Calu3 (cell line): ENCODE measurements at regions of chr1 and their contacts with region 1.

Region 1: GRCh38 chr1:12314333-12314903 is 84.6 kb downstream of the VPS13D start:
- DNase-seq: no peak
- H3K4me3 Mint-ChIP-seq: no peak overlapping the region
- H3K27ac Mint-ChIP-seq: no peak overlapping the region
- H3K4me1 Mint-ChIP-seq: no peaks in the 10 kb centered on the region
- H3K27me3 Mint-ChIP-seq: no peaks in the 10 kb centered on the region
- CTCF ChIP-seq: no peak

Region 2: GRCh38 chr1:12434174-12434573 is 119.8 kb after region 1 on chr1:
- CTCF ChIA-PET with region 1: no interaction called
- intact Hi-C with region 1: loop called (anchors 5 kb)
- DNase-seq: no peak
- H3K4me3 Mint-ChIP-seq: no peak overlapping the region
- H3K27ac Mint-ChIP-seq: peak overlapping the region; percentile 89
- H3K4me1 Mint-ChIP-seq: peaks cover 46% of the 10 kb centered on the region
- H3K27me3 Mint-ChIP-seq: no peaks in the 10 kb centered on the region
- CTCF ChIP-seq: no peak

Region 3: GRCh38 chr1:12549460-12550349 is 235.3 kb after region 1 on chr1:
- CTCF ChIA-PET with region 1: no interaction called
- intact Hi-C with region 1: loop called (anchors 10 kb)
- DNase-seq: peak; percentile 86
- H3K4me3 Mint-ChIP-seq: peak overlapping the region; percentile 37
- H3K27ac Mint-ChIP-seq: peak overlapping the region; percentile 94
- H3K4me1 Mint-ChIP-seq: peaks cover 25% of the 10 kb centered on the region
- H3K27me3 Mint-ChIP-seq: no peaks in the 10 kb centered on the region
- CTCF ChIP-seq: no peak

Region 4: GRCh38 chr1:12658531-12659453 is 344.4 kb after region 1 on chr1:
- CTCF ChIA-PET with region 1: interaction called, 9 read pairs
- intact Hi-C with region 1: loop called (anchors 1 kb)
- DNase-seq: peak; percentile 80
- H3K4me3 Mint-ChIP-seq: no peak overlapping the region
- H3K27ac Mint-ChIP-seq: no peak overlapping the region
- H3K4me1 Mint-ChIP-seq: peaks cover 7% of the 10 kb centered on the region
- H3K27me3 Mint-ChIP-seq: peaks cover 9% of the 10 kb centered on the region
- CTCF ChIP-seq: peak; percentile 84